ENCODE measurements at regions of chr10 and their contacts with region 1.

Region 1: GRCh38 chr10:21292763-21293517 is 232.5 kb downstream of the SKIDA1 start:
- DNase-seq: peak; percentile 95
- ATAC-seq: peak; percentile 91
- H3K4me3 ChIP-seq: peak overlapping the region; percentile 9 to 32
- H3K27ac ChIP-seq: peak overlapping the region; percentile 66
- H3K4me1 ChIP-seq: peaks cover 35 to 40% of the 10 kb centered on the region in 2 experiments
- H3K27me3 ChIP-seq: no peaks in the 10 kb centered on the region
- CTCF ChIP-seq: no peak
- POLR2A ChIP-seq: no peak
- RAD21 ChIP-seq: peak; percentile 29

Region 2: DNA sequence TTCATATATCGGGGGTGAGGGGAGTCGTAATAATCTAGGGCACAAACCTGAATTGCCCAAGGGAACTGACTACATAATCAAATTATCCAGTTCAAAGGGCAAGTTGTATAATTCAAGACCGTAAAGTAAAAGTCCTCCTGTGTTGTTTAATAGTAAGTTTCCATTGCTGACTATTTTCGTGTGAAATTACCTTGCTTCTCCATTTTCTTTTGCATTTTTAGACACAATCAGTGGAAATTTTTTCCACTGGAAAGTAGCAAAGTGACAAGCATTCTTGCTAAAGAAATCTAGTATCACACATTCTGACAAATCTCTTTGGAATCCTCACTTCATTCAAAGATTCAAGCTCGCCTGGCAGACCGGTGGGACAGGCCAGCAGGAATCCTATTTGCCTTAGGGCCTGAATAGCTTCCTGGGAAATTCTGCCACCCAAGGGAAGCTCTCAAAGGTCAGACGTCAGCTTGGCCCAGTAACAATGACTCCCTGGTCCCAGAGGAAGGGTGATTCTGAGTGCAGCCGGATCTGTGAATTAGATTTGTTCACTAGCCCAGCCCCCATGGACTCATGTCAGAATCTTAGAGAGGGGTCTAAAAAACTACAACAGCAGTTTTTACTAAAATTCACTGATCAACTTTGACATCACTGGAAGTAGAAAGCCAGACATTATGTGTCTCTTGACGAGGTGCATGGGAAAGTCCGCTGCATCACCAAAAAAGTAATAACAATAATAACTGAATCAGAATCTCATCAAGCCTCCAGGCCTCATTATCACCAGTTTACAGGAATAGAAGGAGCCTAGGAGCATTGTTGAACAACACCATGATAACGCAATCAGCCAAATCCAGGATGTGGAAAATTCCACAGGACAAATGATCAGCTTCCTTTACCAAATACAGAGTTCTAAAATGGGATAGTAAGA is 71.5 kb after region 1 on chr10:
- CTCF ChIA-PET with region 1: no interaction called
- POLR2A ChIA-PET with region 1: no interaction called
- RAD21 ChIA-PET with region 1: no interaction called
- intact Hi-C with region 1: loop called (anchors 2 kb)
- DNase-seq: peak; percentile 94
- ATAC-seq: peak; percentile 86
- H3K4me3 ChIP-seq: peak overlapping the region in 1 of 2 experiments; percentile 35; a peak in 2 of 4 replicates
- H3K27ac ChIP-seq: peak overlapping the region; percentile 91
- H3K4me1 ChIP-seq: peaks cover 52 to 71% of the 10 kb centered on the region in 2 experiments
- H3K27me3 ChIP-seq: no peaks in the 10 kb centered on the region
- CTCF ChIP-seq: no peak
- POLR2A ChIP-seq: no peak
- RAD21 ChIP-seq: no peak; the same call in 1 of the 2 replicates